Kidney (tissue), 22 donors: ENCODE measurements at regions of chr4 and their contacts with region 1.

Region 1: DNA sequence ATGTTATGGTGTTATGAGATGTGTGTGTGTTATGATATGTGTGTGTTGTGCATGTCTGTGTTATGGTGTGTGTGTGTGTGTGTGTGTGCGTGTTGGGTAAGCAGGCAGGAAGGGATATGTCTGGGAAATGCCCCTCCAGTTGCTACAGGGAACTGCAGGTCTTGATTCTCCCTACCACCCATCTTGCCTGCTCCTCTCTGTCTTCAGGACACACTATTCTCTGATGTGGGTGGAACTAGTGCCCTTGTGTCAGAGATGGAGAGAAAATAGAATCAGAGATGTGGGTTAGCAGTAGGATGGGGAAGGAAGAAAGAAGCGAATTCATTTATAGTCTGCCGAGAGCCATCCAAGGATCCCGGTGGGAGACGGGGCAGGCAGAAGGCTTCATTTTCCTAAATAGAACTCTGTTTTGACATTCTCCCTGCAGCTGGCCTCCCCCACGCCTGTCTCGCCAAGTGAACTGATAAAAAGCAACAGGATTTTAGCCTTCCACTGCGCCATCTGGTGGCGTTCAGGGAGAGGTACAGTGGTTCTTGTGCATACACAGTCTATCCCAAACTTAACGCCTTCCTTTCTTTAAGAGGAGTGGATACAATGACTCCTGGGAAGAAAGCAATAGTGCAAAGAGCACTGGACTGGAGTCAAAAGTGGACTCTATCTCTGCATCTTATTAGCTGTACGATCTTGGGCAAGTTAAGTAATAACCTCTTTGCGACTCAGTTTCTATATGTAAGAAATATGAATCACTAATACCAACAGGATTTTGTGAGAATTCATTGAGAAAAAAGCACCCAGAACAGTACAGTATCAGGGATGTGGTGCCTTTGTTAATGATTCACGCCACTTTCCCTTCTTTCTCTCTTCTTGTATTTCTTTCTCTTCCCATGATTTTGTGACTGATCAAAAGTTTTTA is 14.1 kb upstream of the MGST2 start:
- DNase-seq: peak; percentile 84 to 95 (median 90)
- H3K4me3 ChIP-seq: peak overlapping the region in 1 of 3 donors; percentile 14
- H3K27ac ChIP-seq: no peak overlapping the region
- H3K4me1 ChIP-seq: peaks cover 0 to 5% (median 4%) of the 10 kb centered on the region in 3 donors
- H3K27me3 ChIP-seq: no peaks in the 10 kb centered on the region
- CTCF ChIP-seq: peak; percentile 97

Region 2: GRCh38 chr4:139367421-139368090 is 284.0 kb before region 1 on chr4:
- intact Hi-C with region 1: no loop called
- DNase-seq: peak in 1 of 5 donors; percentile 10
- H3K4me3 ChIP-seq: no peak overlapping the region
- H3K27ac ChIP-seq: no peak overlapping the region
- H3K4me1 ChIP-seq: no peaks in the 10 kb centered on the region
- H3K27me3 ChIP-seq: no peaks in the 10 kb centered on the region
- CTCF ChIP-seq: no peak

Region 3: GRCh38 chr4:139603576-139604387 is 47.8 kb before region 1 on chr4:
- intact Hi-C with region 1: loop called (anchors 10 kb)
- DNase-seq: peak in 3 of 5 donors; percentile 57 to 86 (median 81)
- H3K4me3 ChIP-seq: no peak overlapping the region
- H3K27ac ChIP-seq: no peak overlapping the region
- H3K4me1 ChIP-seq: no peaks in the 10 kb centered on the region
- H3K27me3 ChIP-seq: no peaks in the 10 kb centered on the region
- CTCF ChIP-seq: peak; percentile 60